ENCODE measurements at regions of chr4 and their contacts with region 1.

Region 1: DNA sequence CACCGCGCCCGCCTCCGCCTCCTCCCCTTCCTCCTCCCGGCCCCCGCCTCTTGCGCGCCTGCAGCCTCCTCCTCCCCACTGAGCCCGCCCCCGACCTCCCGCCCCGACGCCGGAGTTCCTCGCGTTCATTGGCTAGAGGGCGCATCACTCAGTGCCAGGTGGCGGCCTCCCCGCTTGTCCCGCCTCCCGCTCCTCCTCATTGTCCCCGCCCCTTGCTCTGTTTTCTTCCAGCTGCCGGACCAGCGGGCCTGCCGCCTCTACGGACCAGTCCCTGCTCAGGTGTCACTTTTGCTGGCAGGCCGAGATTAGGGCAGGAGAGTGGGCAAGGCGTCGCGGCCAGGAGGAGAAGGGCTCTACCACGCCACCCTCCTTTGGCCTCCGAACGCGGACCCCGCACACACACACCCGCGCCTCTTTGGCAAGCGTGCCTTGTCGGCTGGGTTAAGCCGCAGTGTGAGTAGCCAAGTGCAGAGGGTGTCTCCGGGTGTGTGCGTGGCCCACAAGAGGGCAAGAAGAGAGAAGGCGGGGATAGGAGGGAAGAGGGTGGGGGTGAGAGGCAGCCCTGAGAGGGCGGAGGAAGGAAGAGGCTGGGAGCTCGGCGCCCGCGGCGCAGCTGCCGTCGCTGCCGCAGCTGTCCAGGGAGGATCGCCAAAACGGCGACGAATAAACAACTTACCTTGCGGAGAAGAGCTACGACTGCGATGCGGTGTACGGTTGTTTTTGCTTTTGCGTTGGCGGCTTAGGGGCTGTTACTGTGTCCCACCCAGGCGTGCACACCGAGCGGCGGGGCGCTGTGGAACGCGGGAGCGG is 436 bp upstream of the PPP3CA start:
- DNase-seq: peak; percentile 100
- H3K4me3 ChIP-seq: peak overlapping the region; percentile 83
- H3K27ac ChIP-seq: peak overlapping the region; percentile 99
- H3K4me1 ChIP-seq: peaks cover 4% of the 10 kb centered on the region
- H3K27me3 ChIP-seq: no peaks in the 10 kb centered on the region
- CTCF ChIP-seq: no peak

Region 2: GRCh38 chr4:101187841-101188240 is 159.9 kb before region 1 on chr4:
- intact Hi-C with region 1: loop called (anchors 10 kb)
- DNase-seq: no peak
- H3K4me3 ChIP-seq: no peak overlapping the region
- H3K27ac ChIP-seq: no peak overlapping the region
- H3K4me1 ChIP-seq: no peaks in the 10 kb centered on the region
- H3K27me3 ChIP-seq: no peaks in the 10 kb centered on the region
- CTCF ChIP-seq: no peak

Region 3: DNA sequence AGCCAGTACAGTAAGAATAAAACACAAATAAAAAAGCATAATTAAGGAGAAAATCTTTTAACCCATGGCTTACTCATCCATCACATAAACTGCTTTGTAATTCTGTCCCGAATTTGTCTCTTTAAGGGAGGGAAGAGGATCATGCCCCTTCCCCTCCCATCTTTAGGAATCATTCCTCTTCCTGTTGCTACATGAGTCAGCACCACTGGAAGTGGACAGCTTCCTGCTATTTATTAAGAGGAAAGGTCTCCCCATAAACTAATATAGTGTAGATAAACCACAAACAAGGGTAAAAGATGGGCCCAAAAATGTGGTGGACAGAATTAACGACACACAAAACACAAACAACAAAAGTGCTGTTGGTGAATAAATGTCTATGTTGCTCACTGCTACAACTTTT is 76.2 kb before region 1 on chr4:
- intact Hi-C with region 1: loop called (anchors 2 kb)
- DNase-seq: no peak
- H3K4me3 ChIP-seq: no peak overlapping the region
- H3K27ac ChIP-seq: no peak overlapping the region
- H3K4me1 ChIP-seq: peaks cover 3% of the 10 kb centered on the region
- H3K27me3 ChIP-seq: no peaks in the 10 kb centered on the region
- CTCF ChIP-seq: no peak

Measured in colonic mucosa (tissue), 4 donors.